Activated B cell treated with CpG ODN at 0.5 μM for 24 hours (primary cell): ENCODE measurements at regions of chr15 and their contacts with region 1.

Region 1: DNA sequence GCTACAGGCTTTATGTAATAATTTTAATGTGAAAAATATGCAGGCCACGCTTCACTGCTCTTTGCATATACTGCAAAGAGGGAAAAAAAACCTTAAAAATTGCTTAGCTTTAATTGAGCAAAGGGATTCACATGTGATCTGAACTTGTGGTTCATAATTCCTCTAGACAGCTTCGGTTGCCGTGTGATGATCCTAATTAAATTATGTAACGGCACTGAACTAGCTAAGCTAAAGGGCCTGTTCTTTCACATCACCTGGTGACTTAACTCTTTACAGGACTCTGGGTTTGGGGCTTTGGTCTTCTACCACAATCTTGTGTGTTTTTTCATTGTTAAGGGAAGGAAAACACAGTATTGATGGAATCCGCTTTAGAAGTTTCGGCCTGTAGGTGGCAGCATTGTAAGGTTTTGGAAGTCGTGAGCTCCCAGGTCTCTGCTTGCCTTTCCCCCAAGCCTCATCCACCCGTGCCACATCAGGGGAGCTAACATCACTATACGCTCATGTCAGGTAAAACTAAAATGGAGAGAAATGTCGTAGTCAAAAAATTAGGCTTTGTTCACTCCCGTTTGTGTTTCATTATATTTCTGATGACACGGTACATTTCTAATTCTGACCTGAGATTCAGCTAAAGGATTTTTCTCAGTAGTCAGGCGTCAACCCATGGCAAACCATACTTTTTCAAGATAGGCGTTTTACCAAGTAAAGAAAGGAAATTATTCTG is 205.6 kb upstream of the DPH6 start:
- DNase-seq: no peak
- ATAC-seq: no peak
- H3K4me3 Mint-ChIP-seq: no peak overlapping the region
- H3K27ac Mint-ChIP-seq: no peak overlapping the region
- H3K4me1 Mint-ChIP-seq: no peaks in the 10 kb centered on the region
- H3K27me3 Mint-ChIP-seq: peaks cover 5% of the 10 kb centered on the region
- CTCF ChIP-seq: no peak

Region 2: DNA sequence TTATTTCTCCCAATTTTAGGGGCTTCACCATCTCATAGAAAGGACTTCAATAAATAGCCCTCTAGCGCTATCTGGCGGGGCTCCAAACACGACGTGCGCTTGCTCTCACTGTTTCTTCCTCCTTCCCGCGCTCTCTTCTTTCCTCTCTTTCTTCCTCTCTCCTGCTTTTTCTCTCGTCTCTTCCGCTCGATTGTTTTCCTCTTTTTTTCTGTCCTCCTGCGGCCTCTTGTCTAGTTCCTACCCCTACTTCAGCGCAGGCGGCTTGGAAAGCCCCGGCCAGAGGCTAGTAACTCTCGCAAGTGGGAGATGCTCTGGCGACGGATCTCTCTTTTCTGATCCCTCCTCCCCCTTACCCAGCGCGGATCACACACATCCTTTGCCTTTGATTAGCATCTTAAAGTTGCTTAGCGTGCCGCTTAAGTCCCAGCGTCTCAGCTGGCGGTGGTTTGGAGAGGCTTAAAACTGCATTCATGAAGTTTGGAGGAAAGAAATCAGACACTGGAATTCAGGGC is 1355.0 kb after region 1 on chr15:
- CTCF ChIA-PET with region 1: no interaction called
- POLR2A ChIA-PET with region 1: no interaction called
- intact Hi-C with region 1: loop called (anchors 5 kb)
- DNase-seq: no peak
- ATAC-seq: no peak
- H3K4me3 Mint-ChIP-seq: no peak overlapping the region
- H3K27ac Mint-ChIP-seq: no peak overlapping the region
- H3K4me1 Mint-ChIP-seq: peaks cover 26% of the 10 kb centered on the region
- H3K27me3 Mint-ChIP-seq: peaks cover 83% of the 10 kb centered on the region
- CTCF ChIP-seq: no peak